Pancreas (tissue), 10 donors: ENCODE measurements at regions of chr7 and their contacts with region 1.

Region 1: GRCh38 chr7:80699721-80700256 is 61.3 kb downstream of the CD36 start:
- DNase-seq: no peak
- ATAC-seq: peak in 3 of 4 donors; percentile 46 to 56 (median 50)
- H3K4me3 ChIP-seq: no peak overlapping the region
- H3K27ac ChIP-seq: no peak overlapping the region
- H3K4me1 ChIP-seq: no peaks in the 10 kb centered on the region
- H3K27me3 ChIP-seq: peaks cover 0 to 3% (median 0%) of the 10 kb centered on the region in 4 donors
- CTCF ChIP-seq: no peak

Region 2: DNA sequence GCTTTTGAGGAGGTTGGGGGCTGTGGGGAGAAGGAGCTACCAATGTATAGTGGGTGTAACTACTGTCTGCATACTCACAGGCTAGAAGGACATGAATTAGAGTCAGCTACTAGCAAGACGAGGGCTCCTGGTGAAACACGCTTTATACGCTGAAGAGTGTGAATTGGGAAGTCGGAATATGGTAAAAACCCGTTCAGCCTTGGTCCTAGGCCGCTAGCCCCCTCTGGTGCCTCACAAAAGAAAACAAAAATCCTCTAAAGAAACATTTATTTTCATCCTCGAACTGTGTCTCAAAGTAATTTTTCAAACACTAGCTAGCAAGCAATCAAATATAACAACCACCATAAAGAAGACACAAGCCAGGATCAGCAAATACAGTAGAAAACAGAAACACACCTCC is 557.2 kb after region 1 on chr7:
- intact Hi-C with region 1: loop called in 2 of 3 experiments (anchors 10 kb)
- DNase-seq: peak in 1 of 6 donors; percentile 37
- ATAC-seq: peak; percentile 55 to 79 (median 77)
- H3K4me3 ChIP-seq: no peak overlapping the region
- H3K27ac ChIP-seq: no peak overlapping the region
- H3K4me1 ChIP-seq: no peaks in the 10 kb centered on the region
- H3K27me3 ChIP-seq: no peaks in the 10 kb centered on the region
- CTCF ChIP-seq: peak in 2 of 4 donors; percentile 9 to 22

Region 3: DNA sequence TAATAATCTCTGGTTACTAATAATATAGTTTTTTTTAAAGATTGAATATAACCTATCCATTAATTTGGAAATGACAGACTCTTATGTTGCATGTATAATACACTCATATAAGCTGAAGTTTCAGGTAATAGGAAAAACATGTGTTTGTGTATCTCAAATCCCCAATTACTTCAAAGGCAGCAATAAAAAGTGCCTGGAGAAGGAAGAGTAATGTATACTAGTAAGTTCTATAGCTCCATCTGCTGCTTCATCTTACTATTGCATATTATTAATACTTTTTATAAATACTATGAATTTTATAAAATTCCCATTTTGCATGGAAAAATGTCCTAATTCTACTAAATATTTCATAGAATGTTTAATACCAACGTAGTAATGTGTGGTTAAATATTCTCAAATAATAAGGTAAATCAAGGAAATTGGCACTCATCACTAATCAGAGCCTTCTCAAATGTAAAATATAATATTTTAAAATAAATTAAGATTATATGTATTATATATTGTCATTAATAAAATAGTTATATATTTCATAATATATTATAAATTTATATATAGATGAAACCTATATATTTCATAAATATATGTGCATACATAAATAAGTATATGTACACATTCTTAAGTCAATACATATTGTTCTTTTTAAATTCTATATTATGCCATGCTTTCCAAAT is 758.2 kb after region 1 on chr7:
- intact Hi-C with region 1: loop called in 1 of 3 experiments (anchors 10 kb)
- DNase-seq: no peak
- ATAC-seq: peak in 1 of 4 donors; percentile 39
- H3K4me3 ChIP-seq: no peak overlapping the region
- H3K27ac ChIP-seq: no peak overlapping the region
- H3K4me1 ChIP-seq: no peaks in the 10 kb centered on the region
- H3K27me3 ChIP-seq: no peaks in the 10 kb centered on the region
- CTCF ChIP-seq: no peak

Region 4: DNA sequence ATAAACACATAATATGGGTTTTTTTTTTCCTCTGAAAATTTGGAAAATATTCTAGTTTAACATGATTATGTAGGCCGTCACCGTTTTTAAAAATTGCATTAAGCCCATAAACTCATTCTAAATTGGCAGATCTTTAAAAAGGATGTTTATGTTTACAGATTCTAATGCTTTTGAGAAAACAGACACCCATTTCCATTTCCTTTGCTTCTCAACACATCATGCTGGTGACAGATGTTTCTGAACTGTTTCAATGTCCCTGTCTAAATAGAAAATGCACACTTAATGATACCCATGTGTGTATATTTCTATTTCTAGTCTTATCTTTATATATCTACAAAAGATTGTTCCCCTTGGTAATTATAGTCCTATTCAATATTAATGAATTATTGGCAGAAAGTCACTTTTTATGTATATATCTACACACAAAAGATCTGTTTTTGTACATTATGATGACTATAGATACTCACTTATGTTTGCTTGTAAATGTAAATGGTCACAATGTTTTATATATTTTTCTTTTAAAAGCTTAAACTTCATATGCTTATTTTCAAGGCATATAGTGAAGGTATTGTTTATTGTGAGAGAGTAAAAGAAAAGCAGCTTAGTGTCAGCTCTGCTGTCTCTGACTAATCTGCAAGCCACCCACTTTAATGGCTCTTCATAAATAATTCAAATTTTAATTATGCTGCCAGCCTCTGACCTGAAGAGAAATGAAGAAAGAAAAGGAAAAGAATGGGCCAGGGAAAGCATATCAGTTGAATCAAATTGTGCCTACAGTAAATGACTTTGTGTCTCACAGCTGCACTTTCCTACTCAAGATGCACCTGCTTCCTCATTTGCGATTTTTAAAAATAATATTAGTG is 1564.4 kb after region 1 on chr7:
- intact Hi-C with region 1: no loop called
- DNase-seq: no peak
- ATAC-seq: no peak
- H3K4me3 ChIP-seq: no peak overlapping the region
- H3K27ac ChIP-seq: no peak overlapping the region
- H3K4me1 ChIP-seq: no peaks in the 10 kb centered on the region
- H3K27me3 ChIP-seq: no peaks in the 10 kb centered on the region
- CTCF ChIP-seq: no peak